ENCODE measurements at regions of chr20 and their contacts with region 1.

Region 1: DNA sequence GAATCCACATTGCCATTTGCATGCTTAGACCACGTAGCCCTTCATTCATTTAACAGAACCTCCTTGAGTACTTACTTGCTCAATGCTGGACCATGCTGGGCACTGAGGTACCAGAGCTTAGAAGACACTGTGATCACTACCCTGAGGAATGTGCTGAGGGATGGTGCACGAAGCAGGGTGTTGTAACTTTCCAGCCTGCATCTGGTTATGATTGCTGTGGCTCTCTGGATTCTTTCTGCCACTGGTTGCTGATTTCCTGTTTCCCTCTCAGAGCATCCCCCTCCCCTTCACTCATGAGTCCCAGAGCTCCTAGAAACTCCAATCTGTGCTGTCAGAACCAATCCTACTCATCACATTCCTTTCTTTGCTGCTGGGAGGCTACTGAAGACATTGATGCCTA is 537.4 kb downstream of the PTPRT start:
- DNase-seq: no peak
- H3K4me3 ChIP-seq: no peak overlapping the region
- H3K27ac ChIP-seq: no peak overlapping the region
- H3K4me1 ChIP-seq: no peaks in the 10 kb centered on the region
- H3K27me3 ChIP-seq: no peaks in the 10 kb centered on the region
- CTCF ChIP-seq: no peak
- POLR2A ChIP-seq: no peak

Region 2: DNA sequence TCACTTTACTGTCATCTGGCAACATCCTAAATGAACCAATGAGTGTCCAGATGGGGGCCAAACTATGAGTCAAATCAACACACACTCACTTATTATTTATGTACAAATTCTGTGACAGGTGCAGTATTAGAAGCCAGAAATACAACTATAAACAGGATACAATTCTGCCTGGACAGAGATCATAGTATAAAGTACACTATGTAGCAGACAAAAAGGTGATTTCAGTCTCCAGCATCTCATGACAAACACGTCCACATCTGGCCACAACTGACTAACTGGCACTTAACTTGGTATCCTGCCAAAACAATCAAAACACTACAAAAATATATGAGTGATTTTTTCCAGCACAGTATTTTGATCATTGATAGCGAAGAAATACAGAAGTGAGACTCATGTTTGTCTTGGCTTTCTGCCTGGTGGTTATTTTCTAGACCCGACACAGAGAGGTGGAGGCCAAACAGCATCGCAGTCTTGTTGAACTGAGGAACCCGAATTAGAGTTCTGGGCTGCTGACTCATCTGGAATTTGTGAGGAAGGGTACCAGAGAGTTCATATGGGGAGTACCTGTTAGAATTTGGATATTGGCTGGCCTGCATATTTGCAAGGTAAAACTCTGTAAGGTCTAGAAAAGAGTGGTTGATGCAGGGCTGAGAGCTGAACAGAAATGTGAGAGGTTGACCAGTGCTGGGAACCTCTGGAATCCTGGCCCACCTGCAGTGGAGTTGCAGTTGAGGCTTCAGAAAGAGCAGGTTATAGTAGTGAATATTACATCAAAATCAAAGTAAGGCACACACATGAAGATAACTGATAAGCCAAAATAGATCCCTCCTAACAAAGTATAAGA is 62.3 kb after region 1 on chr20:
- intact Hi-C with region 1: loop called (anchors 10 kb)
- DNase-seq: no peak
- H3K4me3 ChIP-seq: no peak overlapping the region
- H3K27ac ChIP-seq: no peak overlapping the region
- H3K4me1 ChIP-seq: no peaks in the 10 kb centered on the region
- H3K27me3 ChIP-seq: no peaks in the 10 kb centered on the region
- CTCF ChIP-seq: no peak
- POLR2A ChIP-seq: no peak

Measured in esophagus squamous epithelium (tissue), 5 donors.